ENCODE measurements at regions of chr5 and their contacts with region 1.

Region 1: DNA sequence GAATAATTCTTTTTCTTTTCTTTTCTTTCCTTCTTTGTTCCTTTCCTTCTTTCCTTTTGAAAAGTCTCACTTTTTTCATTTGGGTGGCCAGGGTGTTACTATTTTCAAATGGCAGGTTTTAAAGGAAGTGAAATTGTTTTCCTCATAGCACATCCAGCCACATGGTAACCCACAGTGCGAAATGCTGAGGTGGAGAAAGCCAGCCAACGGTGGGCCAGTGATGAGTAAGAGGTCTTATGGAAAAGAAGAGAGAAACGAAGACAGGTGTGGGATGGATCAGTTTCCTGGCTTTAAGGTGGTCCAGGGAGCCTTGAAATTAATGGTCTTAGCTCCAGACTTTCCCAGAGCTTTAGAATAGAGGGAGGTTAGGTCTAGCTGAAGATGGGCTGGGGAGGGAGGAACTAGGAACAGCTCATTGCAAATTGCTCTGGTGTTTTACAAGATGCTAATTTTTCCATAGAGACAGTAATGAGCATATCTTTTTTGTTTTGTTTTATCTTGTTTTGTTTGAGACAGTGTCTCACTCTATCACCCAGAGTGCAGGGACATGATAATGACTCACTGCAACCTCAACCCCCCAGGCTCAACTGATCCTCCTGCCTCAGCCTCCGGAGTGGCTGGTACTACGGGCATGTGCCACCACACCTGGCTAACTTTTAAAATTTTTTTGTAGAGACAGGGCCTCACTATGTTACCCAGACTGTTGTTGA is 17.8 kb downstream of the ITK start:
- DNase-seq: peak in 1 of 5 donors; percentile 91
- H3K4me3 ChIP-seq: peak overlapping the region in 1 of 2 donors; percentile 19
- H3K4me3 Mint-ChIP-seq: peak overlapping the region; percentile 68 to 86 (median 72)
- H3K27ac ChIP-seq: peak overlapping the region; percentile 64
- H3K27ac Mint-ChIP-seq: peak overlapping the region; percentile 84 to 96 (median 92)
- H3K4me1 ChIP-seq: peaks cover 99% of the 10 kb centered on the region
- H3K4me1 Mint-ChIP-seq: peaks cover 73 to 96% (median 84%) of the 10 kb centered on the region in 4 donors
- H3K27me3 ChIP-seq: no peaks in the 10 kb centered on the region
- H3K27me3 Mint-ChIP-seq: no peaks in the 10 kb centered on the region

Region 2: DNA sequence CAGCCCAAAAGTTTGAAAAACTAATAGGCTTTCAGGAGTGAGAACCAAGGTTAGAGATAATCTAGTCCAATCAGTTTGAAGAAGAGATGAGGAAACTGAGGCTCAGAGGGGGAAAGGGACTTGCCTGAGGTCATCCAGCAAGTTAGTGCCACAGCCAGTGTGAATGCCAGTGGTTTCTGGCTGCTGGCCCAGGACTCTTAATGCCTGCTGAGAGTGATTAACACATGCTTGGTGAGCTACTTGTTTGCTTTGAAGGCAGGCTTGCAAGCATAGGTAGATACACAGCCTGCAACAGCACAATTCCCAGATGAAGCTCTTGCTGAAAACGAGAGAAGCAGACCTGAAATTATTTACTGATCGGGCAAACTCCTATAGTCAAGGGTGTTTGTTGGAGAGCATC is 1463.0 kb before region 1 on chr5:
- CTCF ChIA-PET with region 1: no interaction called
- POLR2A ChIA-PET with region 1: no interaction called
- intact Hi-C with region 1: no loop called
- DNase-seq: no peak
- H3K4me3 ChIP-seq: no peak overlapping the region
- H3K4me3 Mint-ChIP-seq: no peak overlapping the region
- H3K27ac ChIP-seq: no peak overlapping the region
- H3K27ac Mint-ChIP-seq: no peak overlapping the region
- H3K4me1 ChIP-seq: no peaks in the 10 kb centered on the region
- H3K4me1 Mint-ChIP-seq: no peaks in the 10 kb centered on the region
- H3K27me3 ChIP-seq: no peaks in the 10 kb centered on the region
- H3K27me3 Mint-ChIP-seq: peaks cover 9 to 12% of the 10 kb centered on the region in 2 donors

Region 3: DNA sequence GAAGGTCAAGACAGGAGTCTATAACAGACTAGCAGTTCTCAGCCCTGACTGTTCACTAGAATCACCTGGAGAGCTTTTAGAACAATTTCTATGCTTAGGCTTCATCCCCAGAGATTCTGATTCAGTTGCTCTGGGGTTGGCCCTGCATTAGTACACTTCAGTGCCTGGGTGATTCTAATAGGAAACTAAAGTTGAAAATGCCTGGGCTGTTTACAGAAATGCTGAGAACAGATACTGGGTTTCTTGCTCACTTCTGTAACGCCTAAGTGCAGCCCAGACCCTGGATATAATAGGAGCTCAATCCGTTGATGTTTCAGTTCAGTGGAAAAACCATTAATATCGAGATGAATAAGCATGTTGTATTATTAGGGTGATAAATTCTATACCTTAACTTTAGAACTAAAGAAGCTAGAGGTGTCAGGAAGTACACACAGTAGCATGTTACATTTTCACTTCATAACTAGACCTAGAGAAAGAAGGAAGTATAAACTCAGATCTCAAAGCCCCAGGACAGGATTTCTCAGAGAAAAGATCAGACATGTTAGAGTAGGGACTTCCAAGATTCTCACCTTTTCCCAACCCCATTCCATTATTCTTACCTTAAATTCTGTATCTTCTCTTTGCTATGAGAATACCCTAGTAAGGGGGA is 110.0 kb before region 1 on chr5:
- CTCF ChIA-PET with region 1: no interaction called
- POLR2A ChIA-PET with region 1: no interaction called
- intact Hi-C with region 1: no loop called
- DNase-seq: no peak
- H3K4me3 ChIP-seq: no peak overlapping the region
- H3K4me3 Mint-ChIP-seq: no peak overlapping the region
- H3K27ac ChIP-seq: no peak overlapping the region
- H3K27ac Mint-ChIP-seq: peak overlapping the region in 1 of 7 donors; percentile 46
- H3K4me1 ChIP-seq: no peaks in the 10 kb centered on the region
- H3K4me1 Mint-ChIP-seq: no peaks in the 10 kb centered on the region
- H3K27me3 ChIP-seq: no peaks in the 10 kb centered on the region
- H3K27me3 Mint-ChIP-seq: no peaks in the 10 kb centered on the region

Region 4: DNA sequence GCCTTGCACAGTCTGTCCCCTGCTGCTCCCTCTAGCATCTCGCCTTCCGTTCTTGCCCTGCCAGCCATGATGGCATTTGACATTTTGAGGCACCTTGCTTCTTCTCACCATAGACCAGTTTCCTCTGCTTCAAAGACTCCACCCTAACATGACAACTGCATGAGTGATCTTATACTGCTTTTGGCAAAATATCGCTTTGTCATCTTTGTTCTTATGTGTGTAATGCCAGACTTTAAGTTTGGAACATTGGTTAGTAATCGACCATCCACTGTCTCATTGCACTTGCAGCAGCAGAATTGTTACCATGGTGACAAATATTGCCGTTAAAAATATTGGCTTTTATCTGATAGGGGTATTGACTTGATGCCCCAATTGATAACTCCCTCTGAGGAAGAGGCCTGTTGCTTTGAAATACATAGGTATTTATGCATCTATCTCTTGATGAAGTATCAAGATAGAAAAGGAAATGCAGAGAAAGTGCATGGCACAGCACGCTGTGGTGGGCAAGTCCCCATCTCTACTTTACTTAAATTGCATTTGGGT is 39.2 kb before region 1 on chr5:
- CTCF ChIA-PET with region 1: interaction called, 5 read pairs
- POLR2A ChIA-PET with region 1: interaction called, 20 read pairs
- intact Hi-C with region 1: no loop called
- DNase-seq: peak; percentile 74 to 87 (median 81)
- H3K4me3 ChIP-seq: peak overlapping the region in 1 of 2 donors; percentile 31
- H3K4me3 Mint-ChIP-seq: peak overlapping the region in 7 of 8 donors; percentile 51 to 75 (median 65)
- H3K27ac ChIP-seq: peak overlapping the region; percentile 88
- H3K27ac Mint-ChIP-seq: peak overlapping the region; percentile 91 to 99 (median 98)
- H3K4me1 ChIP-seq: peaks cover 74% of the 10 kb centered on the region
- H3K4me1 Mint-ChIP-seq: peaks cover 57 to 91% (median 73%) of the 10 kb centered on the region in 4 donors
- H3K27me3 ChIP-seq: no peaks in the 10 kb centered on the region
- H3K27me3 Mint-ChIP-seq: no peaks in the 10 kb centered on the region

Region 5: DNA sequence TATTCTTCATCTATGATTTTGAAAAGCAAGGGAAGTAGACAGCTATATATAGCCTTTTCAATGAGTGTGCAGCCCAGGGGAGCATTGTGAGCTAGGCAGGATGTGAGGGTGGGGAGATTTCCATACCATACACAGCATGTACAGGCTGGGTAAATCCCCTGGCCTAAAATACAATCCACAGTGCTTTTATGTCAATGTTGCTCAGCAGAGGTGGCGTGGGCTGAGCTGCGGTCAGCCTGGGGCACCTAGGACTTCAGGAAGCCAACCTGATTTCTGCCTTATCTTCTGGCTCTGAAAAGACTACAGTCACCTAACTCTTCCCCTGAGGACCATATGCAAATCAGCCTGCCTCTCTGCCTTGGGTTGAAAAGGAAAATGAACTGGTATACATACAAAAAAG is 26.0 kb before region 1 on chr5:
- CTCF ChIA-PET with region 1: interaction called, 5 read pairs
- POLR2A ChIA-PET with region 1: interaction called, 1,020 read pairs
- intact Hi-C with region 1: no loop called
- DNase-seq: peak; percentile 71 to 93 (median 80)
- H3K4me3 ChIP-seq: peak overlapping the region in 1 of 2 donors; percentile 20
- H3K4me3 Mint-ChIP-seq: peak overlapping the region; percentile 55 to 79 (median 74)
- H3K27ac ChIP-seq: peak overlapping the region; percentile 61
- H3K27ac Mint-ChIP-seq: peak overlapping the region; percentile 82 to 97 (median 94)
- H3K4me1 ChIP-seq: peaks cover 55% of the 10 kb centered on the region
- H3K4me1 Mint-ChIP-seq: peaks cover 42 to 82% (median 66%) of the 10 kb centered on the region in 4 donors
- H3K27me3 ChIP-seq: no peaks in the 10 kb centered on the region
- H3K27me3 Mint-ChIP-seq: no peaks in the 10 kb centered on the region

Region 6: DNA sequence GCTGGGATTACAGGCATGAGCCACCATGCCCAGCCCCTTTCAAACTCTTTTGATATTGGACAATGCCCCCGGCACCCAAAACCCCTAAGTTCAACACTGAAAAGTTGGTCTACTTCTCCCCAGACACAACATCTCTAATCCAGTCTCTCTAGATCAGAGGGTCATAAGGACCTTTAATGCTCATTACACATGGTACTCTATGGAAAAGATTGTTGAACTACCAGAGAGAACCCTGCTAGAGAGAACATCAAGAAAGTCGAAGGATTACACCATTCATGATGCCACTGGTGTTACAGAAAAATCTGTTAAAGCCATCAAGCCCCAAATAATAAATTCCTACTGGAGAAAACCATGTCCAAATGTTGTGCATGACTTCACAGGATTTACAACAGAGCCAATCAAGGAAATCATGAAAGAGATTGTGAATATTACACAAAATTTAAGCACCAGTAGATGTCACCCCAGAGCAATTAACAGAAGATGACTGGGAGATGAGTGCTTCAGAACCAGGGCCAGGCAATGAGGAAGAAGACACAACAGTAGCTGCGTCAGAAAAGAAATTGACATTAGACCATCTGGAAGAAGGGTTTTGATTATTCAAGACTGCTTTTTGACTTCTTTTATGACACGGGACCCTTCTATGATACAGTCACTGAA is 233.2 kb after region 1 on chr5:
- CTCF ChIA-PET with region 1: no interaction called
- POLR2A ChIA-PET with region 1: no interaction called
- intact Hi-C with region 1: no loop called
- DNase-seq: peak; percentile 49 to 63 (median 59)
- H3K4me3 ChIP-seq: no peak overlapping the region
- H3K4me3 Mint-ChIP-seq: peak overlapping the region in 4 of 8 donors; percentile 17 to 65 (median 42)
- H3K27ac ChIP-seq: no peak overlapping the region
- H3K27ac Mint-ChIP-seq: peak overlapping the region in 6 of 7 donors; percentile 3 to 83 (median 77)
- H3K4me1 ChIP-seq: peaks cover 4% of the 10 kb centered on the region
- H3K4me1 Mint-ChIP-seq: peaks cover 5 to 7% (median 5%) of the 10 kb centered on the region in 4 donors
- H3K27me3 ChIP-seq: no peaks in the 10 kb centered on the region
- H3K27me3 Mint-ChIP-seq: no peaks in the 10 kb centered on the region